MCF 10A (cell line): ENCODE measurements at regions of chr12 and their contacts with region 1.

Region 1: DNA sequence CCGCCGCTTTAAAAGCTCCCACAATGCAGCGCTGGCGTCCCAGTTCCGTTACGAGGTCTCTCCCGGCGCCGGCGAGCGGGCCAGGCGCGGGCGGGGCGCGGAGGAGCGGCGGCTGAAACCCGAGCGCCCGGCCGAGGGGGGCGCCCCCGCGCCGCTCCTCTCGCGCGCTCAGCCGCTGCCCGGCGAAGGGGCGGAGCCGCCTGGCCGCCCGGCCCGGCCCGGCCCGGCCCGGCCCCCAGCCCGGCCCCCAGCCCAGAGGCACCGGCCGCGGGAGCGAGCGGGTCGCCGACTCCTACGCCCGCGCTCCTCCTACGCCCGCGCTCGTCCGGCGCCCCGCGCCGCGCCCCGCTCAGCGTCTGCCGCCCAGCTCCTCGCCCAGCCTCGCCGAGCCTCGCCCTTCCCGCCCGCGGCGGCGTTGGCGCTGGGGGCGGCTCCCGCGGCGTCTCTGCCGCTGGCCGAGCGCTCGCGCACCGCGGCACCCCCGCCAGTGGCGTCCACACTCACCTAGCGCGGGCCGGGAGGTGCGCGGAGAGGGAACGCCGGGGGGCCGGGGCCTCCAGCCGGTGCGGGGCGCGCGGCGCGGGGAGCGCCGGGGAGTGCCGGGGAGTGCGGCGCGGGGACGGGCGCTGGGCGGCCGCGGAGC is at the start of gene RASSF8:
- DNase-seq: peak; percentile 72
- H3K4me3 Mint-ChIP-seq: peak within 1 kb of the TSS; percentile 81
- H3K27ac Mint-ChIP-seq: peak within 1 kb of the TSS; percentile 71
- H3K4me1 Mint-ChIP-seq: peaks cover 27% of the 10 kb centered on the region
- H3K27me3 Mint-ChIP-seq: no peaks in the 10 kb centered on the region
- CTCF ChIP-seq: no peak
- total RNA-seq, gene RASSF8: 52.9 and 70.1 TPM in 2 replicates

Region 2: DNA sequence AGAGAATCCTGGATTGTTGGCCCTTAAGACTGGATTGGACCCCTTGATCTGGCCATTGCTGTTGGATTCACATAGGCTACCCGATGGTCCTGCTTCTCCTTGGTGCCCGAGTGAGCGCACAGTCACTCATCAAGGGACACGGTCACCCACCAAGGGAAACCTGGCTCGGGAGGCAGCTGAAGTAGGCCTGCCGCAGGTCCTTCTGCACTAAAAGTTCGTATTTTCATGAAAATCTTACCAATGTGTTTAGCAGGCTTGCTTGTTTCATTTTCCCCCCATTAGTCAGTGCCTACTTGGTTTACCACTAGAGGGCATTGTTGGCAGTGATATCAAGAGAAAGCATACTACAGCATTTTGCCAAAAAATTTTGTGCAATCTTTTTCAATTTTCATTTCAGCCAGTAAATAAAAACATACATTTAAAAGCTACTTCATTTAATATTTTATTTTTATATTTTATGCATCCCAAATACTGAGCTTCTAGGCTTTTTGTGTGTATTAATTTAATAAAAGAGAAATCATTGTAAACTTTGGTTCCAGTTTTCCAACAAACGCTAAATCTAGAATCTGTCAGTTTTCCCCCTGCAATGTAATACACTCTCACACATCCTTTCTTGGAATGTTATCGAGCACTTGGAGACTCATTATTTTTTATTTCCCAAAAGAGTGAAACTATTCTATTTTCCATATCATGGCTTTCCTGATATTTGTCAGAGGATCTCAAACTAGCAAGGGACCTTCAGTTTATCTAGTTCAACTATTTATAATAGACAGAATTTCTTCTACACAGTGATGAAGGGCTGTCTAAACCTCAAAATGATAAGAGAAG is 522.1 kb before region 1 on chr12:
- CTCF ChIA-PET with region 1: interaction called, 10 read pairs
- POLR2A ChIA-PET with region 1: interaction called, 3 read pairs
- intact Hi-C with region 1: loop called (anchors 1 kb)
- DNase-seq: peak; percentile 81
- H3K4me3 Mint-ChIP-seq: peak overlapping the region; percentile 32
- H3K27ac Mint-ChIP-seq: peak overlapping the region; percentile 65
- H3K4me1 Mint-ChIP-seq: peaks cover 15% of the 10 kb centered on the region
- H3K27me3 Mint-ChIP-seq: no peaks in the 10 kb centered on the region
- CTCF ChIP-seq: peak; percentile 78

Region 3: GRCh38 chr12:25583545-25583944 is 375.0 kb before region 1 on chr12:
- CTCF ChIA-PET with region 1: interaction called, 4 read pairs
- POLR2A ChIA-PET with region 1: interaction called, 29 read pairs
- intact Hi-C with region 1: loop called (anchors 1 kb)
- DNase-seq: peak; percentile 58
- H3K4me3 Mint-ChIP-seq: no peak overlapping the region
- H3K27ac Mint-ChIP-seq: peak overlapping the region; percentile 2
- H3K4me1 Mint-ChIP-seq: peaks cover 27% of the 10 kb centered on the region
- H3K27me3 Mint-ChIP-seq: no peaks in the 10 kb centered on the region
- CTCF ChIP-seq: peak; percentile 22

Region 4: DNA sequence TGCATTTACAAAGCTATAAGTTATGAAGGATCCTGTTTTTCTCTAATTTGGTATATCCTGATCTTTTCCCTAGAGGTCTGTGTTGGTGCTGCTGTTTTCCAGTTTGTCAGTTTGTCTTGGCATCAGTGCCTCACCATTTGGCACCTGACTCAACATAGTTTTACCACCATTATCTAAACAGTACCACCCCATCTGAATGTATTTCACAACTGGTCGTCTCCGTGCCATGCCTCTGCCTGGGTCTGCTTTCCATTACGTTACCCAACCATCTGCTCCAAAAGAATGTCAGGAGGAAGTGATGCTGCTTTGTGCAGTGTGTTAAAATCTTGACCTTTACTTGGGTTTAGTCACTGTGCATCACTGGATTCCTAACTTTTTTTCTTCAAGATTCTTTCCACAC is 129.4 kb before region 1 on chr12:
- CTCF ChIA-PET with region 1: interaction called, 3 read pairs
- POLR2A ChIA-PET with region 1: interaction called, 3 read pairs
- intact Hi-C with region 1: loop called (anchors 1 kb)
- DNase-seq: peak; percentile 96
- H3K4me3 Mint-ChIP-seq: no peak overlapping the region
- H3K27ac Mint-ChIP-seq: peak overlapping the region; percentile 1
- H3K4me1 Mint-ChIP-seq: peaks cover 16% of the 10 kb centered on the region
- H3K27me3 Mint-ChIP-seq: no peaks in the 10 kb centered on the region
- CTCF ChIP-seq: no peak

Region 5: DNA sequence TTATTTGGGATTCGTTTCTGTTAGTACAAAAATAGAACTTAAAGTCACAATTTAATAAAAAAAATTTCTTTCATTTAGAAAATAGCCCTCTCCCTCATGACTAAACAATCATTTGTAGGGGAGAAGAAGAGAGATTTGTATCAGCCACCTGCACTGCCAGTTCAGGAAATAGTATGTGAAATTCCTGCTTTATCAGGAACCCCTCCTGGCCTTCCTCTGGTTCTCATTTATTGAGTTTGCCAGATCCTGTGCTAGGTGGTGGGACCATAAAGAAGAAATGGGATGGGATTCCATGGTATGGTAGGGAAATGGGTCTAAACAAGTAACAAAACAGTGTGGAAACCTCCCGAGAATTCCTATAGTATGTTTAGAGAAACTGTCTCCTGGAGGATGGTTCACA is 30.0 kb after region 1 on chr12:
- CTCF ChIA-PET with region 1: interaction called, 7 read pairs
- POLR2A ChIA-PET with region 1: interaction called, 11 read pairs
- intact Hi-C with region 1: no loop called
- DNase-seq: no peak
- H3K4me3 Mint-ChIP-seq: no peak overlapping the region
- H3K27ac Mint-ChIP-seq: no peak overlapping the region
- H3K4me1 Mint-ChIP-seq: peaks cover 25% of the 10 kb centered on the region
- H3K27me3 Mint-ChIP-seq: no peaks in the 10 kb centered on the region
- CTCF ChIP-seq: no peak

Region 6: GRCh38 chr12:26028953-26029735 is 70.6 kb after region 1 on chr12:
- CTCF ChIA-PET with region 1: interaction called, 5 read pairs
- POLR2A ChIA-PET with region 1: interaction called, 8 read pairs
- intact Hi-C with region 1: loop called (anchors 1 kb)
- DNase-seq: peak; percentile 56
- H3K4me3 Mint-ChIP-seq: no peak overlapping the region
- H3K27ac Mint-ChIP-seq: no peak overlapping the region
- H3K4me1 Mint-ChIP-seq: peaks cover 21% of the 10 kb centered on the region
- H3K27me3 Mint-ChIP-seq: no peaks in the 10 kb centered on the region
- CTCF ChIP-seq: peak; percentile 80